ENCODE measurements at regions of chr15 and their contacts with region 1.

Region 1: GRCh38 chr15:43824302-43825246 is at the start of gene MFAP1:
- DNase-seq: peak; percentile 76 to 96 (median 90)
- ATAC-seq: peak; percentile 91 to 93
- H3K4me3 Mint-ChIP-seq: peak within 1 kb of the TSS; percentile 95 to 99 (median 98)
- H3K27ac Mint-ChIP-seq: peak within 1 kb of the TSS; percentile 96 to 99 (median 98)
- H3K4me1 Mint-ChIP-seq: peaks cover 21 to 73% (median 62%) of the 10 kb centered on the region in 4 donors
- H3K27me3 Mint-ChIP-seq: no peaks in the 10 kb centered on the region
- polyA plus RNA-seq, gene MFAP1: 5.2 to 18.0 (median 10.4) TPM

Region 2: GRCh38 chr15:43762824-43763223 is 61.8 kb before region 1 on chr15:
- POLR2A ChIA-PET with region 1: no interaction called
- DNase-seq: no peak
- ATAC-seq: no peak
- H3K4me3 Mint-ChIP-seq: no peak overlapping the region
- H3K27ac Mint-ChIP-seq: peak overlapping the region in 2 of 10 donors; percentile 13 to 69
- H3K4me1 Mint-ChIP-seq: peaks cover 0 to 3% (median under 1%) of the 10 kb centered on the region in 4 donors
- H3K27me3 Mint-ChIP-seq: no peaks in the 10 kb centered on the region

Region 3: DNA sequence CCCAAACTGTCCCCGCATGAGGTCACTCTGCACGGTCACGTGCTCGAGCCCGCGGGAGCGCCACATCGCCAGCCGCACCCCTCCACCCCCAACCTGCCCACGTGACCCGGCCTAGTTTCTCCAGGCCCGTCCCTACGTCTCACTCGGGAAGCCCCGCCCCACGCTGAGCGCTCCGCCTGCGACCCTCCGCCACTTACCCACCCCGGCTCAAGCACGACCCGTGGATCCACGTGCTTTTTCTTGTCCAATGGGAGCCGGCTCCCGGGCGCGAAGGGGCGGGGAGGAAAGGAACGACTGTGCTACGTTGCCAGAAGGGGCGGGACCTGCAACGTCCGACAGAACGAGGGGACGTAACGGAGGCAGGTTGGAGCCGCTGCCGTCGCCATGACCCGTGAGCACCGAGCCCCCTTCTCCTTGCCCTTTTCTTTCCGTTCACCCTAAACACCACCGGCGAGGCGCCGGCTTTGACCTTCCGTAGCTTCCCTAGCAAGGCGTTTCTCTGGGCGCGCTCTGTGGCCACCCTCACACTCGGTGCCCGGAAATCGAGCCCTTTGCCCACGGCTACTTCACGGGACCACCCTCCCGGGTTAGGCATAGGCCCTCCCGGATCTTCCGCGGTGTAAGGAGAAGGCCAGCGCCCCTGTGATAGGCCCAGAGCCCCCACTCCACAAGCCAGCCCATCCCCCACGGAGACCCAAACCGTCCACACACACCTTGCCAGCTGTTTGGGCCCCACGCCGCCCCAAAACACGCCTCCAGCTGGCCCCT is 32.4 kb before region 1 on chr15 and contains the start of gene SERF2:
- POLR2A ChIA-PET with region 1: interaction called, 14 read pairs
- DNase-seq: peak; percentile 95 to 100 (median 98)
- ATAC-seq: peak; percentile 92 to 93
- H3K4me3 Mint-ChIP-seq: peak within 1 kb of the TSS; percentile 93 to 99 (median 96)
- H3K27ac Mint-ChIP-seq: peak within 1 kb of the TSS; percentile 94 to 99 (median 99)
- H3K4me1 Mint-ChIP-seq: peaks cover 25 to 56% (median 46%) of the 10 kb centered on the region in 4 donors
- H3K27me3 Mint-ChIP-seq: no peaks in the 10 kb centered on the region
- polyA plus RNA-seq, gene SERF2: 1,905 to 2,412 (median 2,207) TPM

Region 4: GRCh38 chr15:43800286-43801141 is 24.1 kb before region 1 on chr15 and contains the start of gene HYPK:
- POLR2A ChIA-PET with region 1: interaction called, 42 read pairs
- DNase-seq: peak; percentile 84 to 95 (median 88)
- ATAC-seq: peak; percentile 97 to 99
- H3K4me3 Mint-ChIP-seq: peak within 1 kb of the TSS; percentile 97 to 100 (median 100)
- H3K27ac Mint-ChIP-seq: peak within 1 kb of the TSS; percentile 98 to 100 (median 100)
- H3K4me1 Mint-ChIP-seq: peaks cover 18 to 55% (median 44%) of the 10 kb centered on the region in 4 donors
- H3K27me3 Mint-ChIP-seq: no peaks in the 10 kb centered on the region
- polyA plus RNA-seq, gene HYPK: 7.7 to 14.1 (median 13.0) TPM

Region 5: GRCh38 chr15:43845421-43845820 is 20.8 kb after region 1 on chr15:
- POLR2A ChIA-PET with region 1: no interaction called
- DNase-seq: no peak
- ATAC-seq: no peak
- H3K4me3 Mint-ChIP-seq: no peak overlapping the region
- H3K27ac Mint-ChIP-seq: no peak overlapping the region
- H3K4me1 Mint-ChIP-seq: no peaks in the 10 kb centered on the region
- H3K27me3 Mint-ChIP-seq: no peaks in the 10 kb centered on the region

Region 6: DNA sequence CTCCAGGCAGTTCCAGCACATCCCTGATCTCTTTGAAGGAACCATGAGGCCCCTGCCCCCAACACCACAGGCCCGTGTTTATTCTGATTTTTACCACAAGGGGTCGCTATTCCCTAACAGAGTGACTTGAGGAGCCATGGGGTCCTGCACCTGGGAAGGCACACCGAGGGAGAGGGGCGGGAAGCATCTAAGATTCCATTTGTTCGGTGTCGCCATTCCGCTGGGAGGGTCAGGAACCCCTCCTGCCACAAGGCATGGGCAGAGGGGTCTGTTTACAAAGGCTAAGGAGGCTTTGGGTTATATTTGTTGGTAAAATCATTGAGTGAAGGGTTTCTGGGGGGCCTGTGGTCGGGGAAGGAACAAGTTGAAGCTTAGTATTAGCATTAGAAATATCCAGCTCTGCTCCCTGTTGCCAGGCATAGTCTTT is 79.3 kb after region 1 on chr15:
- POLR2A ChIA-PET with region 1: no interaction called
- DNase-seq: peak; percentile 8 to 76 (median 43)
- ATAC-seq: peak; percentile 67
- H3K4me3 Mint-ChIP-seq: peak overlapping the region in 1 of 10 donors; percentile 30
- H3K27ac Mint-ChIP-seq: peak overlapping the region in 2 of 10 donors; percentile 7 to 39
- H3K4me1 Mint-ChIP-seq: peaks cover 2 to 7% (median 5%) of the 10 kb centered on the region in 4 donors
- H3K27me3 Mint-ChIP-seq: peaks cover 0 to 4% (median 0%) of the 10 kb centered on the region in 5 donors